AG04450 (cell line): ENCODE measurements at regions of chr13 and their contacts with region 1.

Region 1: GRCh38 chr13:46778890-46779289 is 18.1 kb downstream of the ESD start:
- DNase-seq: no peak
- H3K4me3 ChIP-seq: no peak overlapping the region
- H3K27ac ChIP-seq: no peak overlapping the region
- H3K27me3 ChIP-seq: no peaks in the 10 kb centered on the region
- CTCF ChIP-seq: no peak

Region 2: GRCh38 chr13:46751811-46752635 is 26.9 kb before region 1 on chr13:
- CTCF ChIA-PET with region 1: no interaction called
- POLR2A ChIA-PET with region 1: no interaction called
- DNase-seq: no peak
- H3K4me3 ChIP-seq: no peak overlapping the region
- H3K27ac ChIP-seq: no peak overlapping the region
- H3K27me3 ChIP-seq: no peaks in the 10 kb centered on the region
- CTCF ChIP-seq: no peak

Region 3: DNA sequence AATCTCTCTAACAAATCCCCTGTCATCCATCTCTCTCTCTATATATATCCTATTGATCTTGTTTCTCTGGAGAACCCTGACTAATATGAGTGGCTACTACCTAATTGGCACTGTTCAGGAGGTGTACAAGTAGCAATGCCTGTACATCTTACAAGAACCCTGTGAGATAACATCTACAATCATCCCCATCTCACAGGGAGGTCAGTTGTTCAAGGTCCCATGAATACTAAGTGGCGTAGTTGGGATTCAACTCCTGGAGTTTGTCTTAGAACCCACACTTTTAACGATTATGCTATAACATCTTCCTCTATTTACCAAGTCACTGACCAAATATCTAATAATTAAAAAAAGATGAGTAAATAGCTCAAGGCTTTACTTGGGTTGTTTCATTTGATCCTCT is 16.4 kb before region 1 on chr13:
- CTCF ChIA-PET with region 1: interaction called, 42 read pairs
- POLR2A ChIA-PET with region 1: no interaction called
- DNase-seq: no peak
- H3K4me3 ChIP-seq: no peak overlapping the region
- H3K27ac ChIP-seq: no peak overlapping the region
- H3K27me3 ChIP-seq: peaks cover 5% of the 10 kb centered on the region
- CTCF ChIP-seq: no peak

Region 4: DNA sequence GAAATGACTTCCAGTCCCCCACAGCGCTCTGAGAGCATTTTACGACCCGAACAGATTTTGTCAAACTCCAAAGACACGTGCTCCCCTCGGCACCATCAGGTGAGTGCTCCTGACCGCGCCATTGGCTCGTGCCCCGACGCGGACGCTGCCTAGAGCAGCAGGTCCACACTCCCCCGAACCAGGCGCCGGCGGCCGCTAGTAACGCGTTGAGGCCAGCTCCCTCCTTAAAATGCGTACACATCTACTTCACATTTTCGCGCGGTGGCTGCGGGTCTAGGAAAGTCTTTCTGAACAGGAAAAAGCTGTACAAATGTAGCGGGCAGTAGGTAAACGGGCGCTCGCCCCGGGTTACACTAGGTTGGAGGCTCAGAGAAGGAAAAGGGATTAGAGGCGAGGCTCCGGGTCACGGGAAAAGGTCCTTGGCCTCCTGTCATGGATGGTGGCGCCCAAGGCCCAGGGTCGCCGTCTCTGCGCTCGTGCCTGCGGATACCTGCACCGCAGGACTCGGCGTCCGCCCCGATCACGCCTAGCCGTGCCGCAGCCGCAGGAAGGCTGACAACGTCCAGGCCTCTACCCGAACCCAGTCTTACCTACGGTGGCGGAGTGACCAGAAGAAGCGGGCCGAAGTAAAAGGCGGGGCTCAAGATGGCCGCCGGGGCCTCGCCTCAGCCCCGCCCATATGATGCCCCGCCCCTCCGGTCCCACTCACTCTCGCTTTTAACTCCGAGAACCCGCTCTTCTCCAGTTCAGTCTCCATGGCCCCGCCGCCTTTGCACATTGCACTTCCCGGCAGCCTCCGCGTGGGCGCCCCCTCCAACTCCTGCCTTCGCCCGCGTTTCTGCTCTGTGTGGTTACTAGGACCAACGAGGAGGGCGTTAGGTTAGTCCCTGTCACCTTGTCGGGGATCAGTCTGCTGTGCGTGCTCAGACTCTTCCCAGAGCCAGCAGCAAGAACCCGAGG is 17.9 kb after region 1 on chr13 and contains the start of gene ESD:
- CTCF ChIA-PET with region 1: no interaction called
- POLR2A ChIA-PET with region 1: no interaction called
- DNase-seq: peak; percentile 67
- H3K4me3 ChIP-seq: peak within 1 kb of the TSS; percentile 88
- H3K27ac ChIP-seq: peak within 1 kb of the TSS; percentile 79
- H3K27me3 ChIP-seq: no peaks in the 10 kb centered on the region
- CTCF ChIP-seq: no peak
- polyA plus RNA-seq, gene ESD: 180 and 208 TPM in 2 replicates